ENCODE measurements at regions of chr2 and their contacts with region 1.

Region 1: DNA sequence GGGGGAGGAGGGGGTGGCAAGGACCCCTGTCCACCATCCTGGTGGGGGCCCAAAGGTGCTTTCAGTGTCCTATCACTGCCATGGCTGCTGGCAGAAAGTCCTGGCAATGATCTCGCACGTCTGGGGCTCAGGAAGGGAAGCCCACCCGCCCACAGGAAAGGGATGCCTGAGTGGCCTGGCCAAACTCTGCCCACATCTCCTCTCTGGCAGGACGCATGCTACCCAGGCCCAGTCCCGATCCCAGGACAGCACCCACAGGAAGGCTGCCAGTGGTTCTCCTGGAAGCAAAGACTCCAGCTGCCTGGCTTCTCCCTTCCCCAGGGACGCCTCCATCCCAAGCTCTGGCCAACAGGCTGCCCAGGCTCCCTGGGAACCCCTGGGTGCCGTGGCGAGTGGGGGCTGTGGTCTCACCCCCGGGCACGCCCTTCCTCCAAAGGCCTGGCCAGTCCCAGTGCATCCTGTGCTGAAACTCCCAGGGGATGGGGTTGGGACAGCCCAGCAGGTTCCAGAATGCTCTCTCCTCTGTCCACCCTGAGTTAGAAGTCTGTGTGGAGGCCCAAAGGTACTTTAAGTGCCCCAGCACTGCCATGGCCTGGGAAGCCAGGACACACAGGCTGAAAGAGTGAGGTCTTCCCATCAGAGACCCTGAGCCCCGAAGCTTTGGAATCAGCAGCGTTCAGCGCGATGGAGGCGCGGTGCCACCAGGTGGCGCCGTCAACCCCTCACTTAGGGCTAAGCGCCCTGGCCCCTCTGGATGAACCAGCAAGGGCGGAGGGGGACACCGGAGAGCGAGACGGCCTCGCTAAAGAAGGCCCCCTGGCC is 29.8 kb upstream of the TAF1B start:
- DNase-seq: peak; percentile 70
- H3K4me3 ChIP-seq: no peak overlapping the region
- H3K27ac ChIP-seq: no peak overlapping the region
- H3K4me1 ChIP-seq: no peaks in the 10 kb centered on the region
- CTCF ChIP-seq: peak; percentile 98

Region 2: GRCh38 chr2:9951272-9951972 is 137.9 kb after region 1 on chr2 and contains the start of gene GRHL1:
- CTCF ChIA-PET with region 1: no interaction called
- POLR2A ChIA-PET with region 1: interaction called, 3 read pairs
- intact Hi-C with region 1: loop called (anchors 5 kb)
- DNase-seq: peak; percentile 93
- H3K4me3 ChIP-seq: peak within 1 kb of the TSS; percentile 77
- H3K27ac ChIP-seq: no peak within 1 kb of the TSS
- H3K4me1 ChIP-seq: peaks cover 12% of the 10 kb centered on the region
- CTCF ChIP-seq: no peak
- total RNA-seq, gene GRHL1: 0.19 and 2.4 TPM in 2 replicates

Region 3: GRCh38 chr2:10028988-10029874 is 215.7 kb after region 1 on chr2:
- CTCF ChIA-PET with region 1: no interaction called
- POLR2A ChIA-PET with region 1: no interaction called
- intact Hi-C with region 1: loop called (anchors 5 kb)
- DNase-seq: no peak
- H3K4me3 ChIP-seq: no peak overlapping the region
- H3K27ac ChIP-seq: no peak overlapping the region
- H3K4me1 ChIP-seq: no peaks in the 10 kb centered on the region
- CTCF ChIP-seq: no peak

Measured in OCI-LY7 (cell line).